ENCODE measurements at regions of chr4 and their contacts with region 1.

Region 1: DNA sequence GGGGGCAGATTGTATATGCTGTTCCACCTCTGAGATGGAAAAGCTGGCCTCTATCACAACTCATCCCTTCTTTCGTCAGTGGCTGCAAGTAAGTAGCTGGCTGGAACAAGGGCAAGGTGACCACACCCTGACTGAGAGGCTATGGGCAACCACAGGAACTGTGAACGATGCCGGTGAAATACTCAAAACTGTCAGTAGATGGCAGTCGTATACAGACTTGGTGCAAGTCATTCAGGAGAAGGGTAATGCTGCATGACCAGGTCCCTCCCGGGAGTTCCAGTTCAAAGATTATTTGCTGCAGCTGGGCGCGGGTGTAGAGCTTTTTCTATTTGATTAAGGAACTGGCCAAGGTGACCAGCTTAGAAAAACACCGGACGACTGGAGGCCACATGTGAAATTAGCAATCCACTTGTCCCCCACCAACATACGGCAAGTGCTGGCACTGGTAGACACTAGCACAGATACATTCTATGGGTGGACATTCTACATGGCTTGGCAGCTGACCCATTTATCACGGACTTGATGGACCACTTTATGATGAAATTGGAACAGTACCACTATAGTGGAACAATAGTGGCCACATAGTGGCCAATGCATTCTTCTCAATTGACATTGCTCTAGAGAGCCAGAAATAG is 726.7 kb downstream of the TRAM1L1 start:
- DNase-seq: peak; percentile 72 to 87 (median 82)
- H3K4me3 ChIP-seq: no peak overlapping the region
- H3K27ac ChIP-seq: no peak overlapping the region
- H3K4me1 ChIP-seq: no peaks in the 10 kb centered on the region
- H3K27me3 ChIP-seq: no peaks in the 10 kb centered on the region

Region 2: GRCh38 chr4:116346750-116347149 is 12.0 kb before region 1 on chr4:
- CTCF ChIA-PET with region 1: interaction called, 13 read pairs
- POLR2A ChIA-PET with region 1: no interaction called
- DNase-seq: no peak
- H3K4me3 ChIP-seq: no peak overlapping the region
- H3K27ac ChIP-seq: no peak overlapping the region
- H3K4me1 ChIP-seq: peaks cover 0 to 12% (median 2%) of the 10 kb centered on the region in 4 experiments
- H3K27me3 ChIP-seq: no peaks in the 10 kb centered on the region

Region 3: DNA sequence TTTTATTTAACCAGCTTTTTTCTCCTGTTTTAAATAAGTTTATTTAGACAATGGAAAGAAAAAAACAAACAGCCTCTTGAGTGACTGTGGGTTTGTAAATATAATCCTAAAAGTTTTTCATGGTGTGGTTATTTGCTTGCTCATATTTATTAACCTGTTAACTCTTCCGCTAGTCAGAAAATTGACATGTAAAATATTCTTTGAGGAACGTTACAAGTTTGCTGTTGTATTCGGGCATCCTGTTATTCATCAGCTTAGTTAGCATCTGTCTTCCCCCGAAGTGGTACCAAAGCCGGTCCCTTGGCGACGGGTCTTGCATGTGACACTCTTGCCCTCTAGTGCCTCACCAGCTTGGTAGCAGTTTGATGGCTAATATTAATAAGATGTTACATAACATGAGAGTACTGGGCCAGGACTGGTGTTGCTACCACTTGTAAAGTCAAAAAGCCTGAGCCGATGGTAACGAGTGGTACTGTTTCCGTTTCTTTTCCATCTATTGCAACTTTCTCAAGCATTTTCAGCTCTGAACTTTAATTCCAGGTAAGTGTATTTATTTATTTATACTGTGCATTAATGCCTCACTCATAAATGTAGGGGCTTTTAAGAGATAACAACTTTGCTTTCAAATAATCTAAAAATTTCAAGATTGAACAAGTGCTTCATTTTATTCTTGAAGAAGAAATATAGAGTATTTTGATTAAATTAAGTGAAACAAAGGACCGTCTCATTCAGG is 1675.5 kb after region 1 on chr4 and contains the start of gene NDST3:
- CTCF ChIA-PET with region 1: interaction called, 10 read pairs
- POLR2A ChIA-PET with region 1: interaction called, 4 read pairs
- DNase-seq: peak; percentile 85 to 93 (median 91)
- H3K4me3 ChIP-seq: peak within 1 kb of the TSS; percentile 37 to 72 (median 64)
- H3K27ac ChIP-seq: no peak within 1 kb of the TSS
- H3K4me1 ChIP-seq: peaks cover 0 to 9% (median 7%) of the 10 kb centered on the region in 4 experiments
- H3K27me3 ChIP-seq: peaks cover 0 to 21% (median 7%) of the 10 kb centered on the region in 5 experiments